CD4-positive, alpha-beta T cell (primary cell): ENCODE measurements at regions of chr6 and their contacts with region 1.

Region 1: DNA sequence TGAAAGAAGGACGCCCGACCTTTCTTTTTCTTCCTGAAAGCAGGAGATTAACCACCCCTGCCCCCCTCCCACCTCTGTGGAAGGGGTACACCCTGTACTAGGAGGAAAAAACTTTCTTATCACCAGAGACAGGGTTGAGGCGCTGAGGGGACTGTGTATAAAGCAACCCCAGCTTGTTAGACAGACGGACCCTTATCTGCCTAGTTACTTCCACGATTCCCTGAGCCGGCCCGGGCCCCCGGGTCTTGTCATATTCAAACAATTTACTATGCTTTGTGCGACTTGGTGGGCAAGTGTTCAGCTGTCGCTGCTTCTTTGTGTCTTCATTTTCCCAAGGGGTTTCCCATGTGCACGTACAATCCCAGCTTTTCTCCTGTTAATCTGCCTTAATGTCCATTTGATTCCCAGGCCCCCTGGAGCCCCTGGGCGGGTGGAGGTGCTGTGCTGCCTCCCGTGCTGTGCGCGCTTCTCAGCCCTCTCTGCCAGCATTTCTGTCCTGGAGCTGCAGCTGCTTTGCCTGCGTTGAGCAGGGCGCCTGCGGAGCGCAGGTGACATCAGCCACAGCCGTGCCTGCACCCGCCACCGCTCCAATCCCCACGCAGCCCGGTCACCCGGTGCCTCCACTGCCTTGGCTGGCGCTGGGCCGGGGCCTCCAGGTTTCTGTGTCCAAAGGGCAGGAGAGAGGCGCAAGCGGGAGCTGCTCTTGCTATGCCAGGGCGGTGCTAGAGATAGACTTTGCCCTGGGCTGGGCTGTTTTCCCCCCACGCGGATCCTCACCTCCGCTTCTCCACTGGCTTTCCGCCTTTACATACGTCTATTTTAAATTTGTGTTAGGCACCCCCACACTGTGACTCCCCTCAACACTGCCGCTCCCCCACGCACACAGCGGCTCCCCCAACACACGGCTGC is 96.2 kb downstream of the TTLL2 start:
- DNase-seq: no peak
- ATAC-seq: no peak
- H3K4me3 ChIP-seq: no peak overlapping the region
- H3K4me3 Mint-ChIP-seq: no peak overlapping the region
- H3K27ac ChIP-seq: no peak overlapping the region
- H3K27ac Mint-ChIP-seq: no peak overlapping the region
- H3K4me1 ChIP-seq: no peaks in the 10 kb centered on the region
- H3K4me1 Mint-ChIP-seq: no peaks in the 10 kb centered on the region
- H3K27me3 ChIP-seq: peaks cover 0 to 5% of the 10 kb centered on the region in 2 experiments
- H3K27me3 Mint-ChIP-seq: peaks cover 22% of the 10 kb centered on the region
- CTCF ChIP-seq: no peak

Region 2: DNA sequence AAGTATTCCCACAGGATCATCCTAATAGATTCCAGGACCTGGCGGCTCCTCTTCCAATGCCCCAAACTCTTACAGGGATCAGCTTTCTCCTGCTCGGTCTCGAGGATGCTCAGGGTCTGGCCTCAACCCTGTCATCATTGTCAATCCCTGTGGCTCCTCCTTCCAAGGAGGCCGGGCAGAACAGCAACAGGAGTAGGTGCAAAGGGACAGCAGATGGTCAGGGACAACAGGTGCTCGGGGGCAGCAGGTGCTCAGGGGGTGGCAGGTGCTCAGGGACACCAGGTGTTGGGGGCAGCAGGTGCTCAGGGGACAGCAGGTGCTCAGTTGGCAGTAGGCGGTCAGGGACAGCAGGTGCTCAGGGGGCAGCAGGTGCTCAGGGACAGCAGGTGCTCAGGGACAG is 11.4 kb before region 1 on chr6:
- CTCF ChIA-PET with region 1: no interaction called
- POLR2A ChIA-PET with region 1: no interaction called
- intact Hi-C with region 1: no loop called
- DNase-seq: no peak
- ATAC-seq: no peak
- H3K4me3 ChIP-seq: no peak overlapping the region
- H3K4me3 Mint-ChIP-seq: no peak overlapping the region
- H3K27ac ChIP-seq: no peak overlapping the region
- H3K27ac Mint-ChIP-seq: no peak overlapping the region
- H3K4me1 ChIP-seq: no peaks in the 10 kb centered on the region
- H3K4me1 Mint-ChIP-seq: no peaks in the 10 kb centered on the region
- H3K27me3 ChIP-seq: peaks cover 0 to 4% of the 10 kb centered on the region in 2 experiments
- H3K27me3 Mint-ChIP-seq: peaks cover 12% of the 10 kb centered on the region
- CTCF ChIP-seq: no peak

Region 3: GRCh38 chr6:167452338-167453081 is 31.4 kb after region 1 on chr6:
- CTCF ChIA-PET with region 1: no interaction called
- POLR2A ChIA-PET with region 1: no interaction called
- intact Hi-C with region 1: loop called in 1 of 2 experiments (anchors 2 kb)
- DNase-seq: no peak
- ATAC-seq: no peak
- H3K4me3 ChIP-seq: no peak overlapping the region
- H3K4me3 Mint-ChIP-seq: no peak overlapping the region
- H3K27ac ChIP-seq: no peak overlapping the region
- H3K27ac Mint-ChIP-seq: no peak overlapping the region
- H3K4me1 ChIP-seq: no peaks in the 10 kb centered on the region
- H3K4me1 Mint-ChIP-seq: no peaks in the 10 kb centered on the region
- H3K27me3 ChIP-seq: peaks cover 7 to 8% of the 10 kb centered on the region in 2 experiments
- H3K27me3 Mint-ChIP-seq: peaks cover 11% of the 10 kb centered on the region
- CTCF ChIP-seq: no peak